ENCODE measurements at regions of chr13 and their contacts with region 1.

Region 1: GRCh38 chr13:26051657-26052311 is at the start of gene SHISA2:
- DNase-seq: peak; percentile 2 to 51 (median 31)
- ATAC-seq: peak; percentile 82
- H3K4me3 ChIP-seq: peak within 1 kb of the TSS; percentile 39
- H3K4me3 Mint-ChIP-seq: peak within 1 kb of the TSS; percentile 77 to 89 (median 83)
- H3K27ac ChIP-seq: peak within 1 kb of the TSS; percentile 13
- H3K27ac Mint-ChIP-seq: peak within 1 kb of the TSS in 4 of 9 donors; percentile 16 to 67 (median 60)
- H3K4me1 ChIP-seq: peaks cover 0 to 11% of the 10 kb centered on the region in 2 donors
- H3K4me1 Mint-ChIP-seq: peaks cover 0 to 37% (median 17%) of the 10 kb centered on the region in 7 donors
- H3K27me3 ChIP-seq: peaks cover 0 to 6% of the 10 kb centered on the region in 2 donors
- H3K27me3 Mint-ChIP-seq: peaks cover 0 to 71% (median 29%) of the 10 kb centered on the region in 5 donors
- total RNA-seq, gene SHISA2: 0.98 to 3.6 (median 1.6) TPM

Region 2: GRCh38 chr13:25847145-25847544 is 204.6 kb before region 1 on chr13:
- CTCF ChIA-PET with region 1: no interaction called
- POLR2A ChIA-PET with region 1: interaction called, 3 read pairs
- intact Hi-C with region 1: loop called in 1 of 2 experiments (anchors 5 kb)
- DNase-seq: peak in 7 of 9 donors; percentile 17 to 65 (median 47)
- ATAC-seq: peak; percentile 75
- H3K4me3 ChIP-seq: peak overlapping the region; percentile 38
- H3K4me3 Mint-ChIP-seq: peak overlapping the region; percentile 26 to 75 (median 66)
- H3K27ac ChIP-seq: peak overlapping the region; percentile 39
- H3K27ac Mint-ChIP-seq: peak overlapping the region; percentile 6 to 91 (median 72)
- H3K4me1 ChIP-seq: peaks cover 13 to 23% of the 10 kb centered on the region in 2 donors
- H3K4me1 Mint-ChIP-seq: peaks cover 21 to 48% (median 38%) of the 10 kb centered on the region in 7 donors
- H3K27me3 ChIP-seq: no peaks in the 10 kb centered on the region
- H3K27me3 Mint-ChIP-seq: peaks cover 0 to 3% (median 0%) of the 10 kb centered on the region in 5 donors

Region 3: DNA sequence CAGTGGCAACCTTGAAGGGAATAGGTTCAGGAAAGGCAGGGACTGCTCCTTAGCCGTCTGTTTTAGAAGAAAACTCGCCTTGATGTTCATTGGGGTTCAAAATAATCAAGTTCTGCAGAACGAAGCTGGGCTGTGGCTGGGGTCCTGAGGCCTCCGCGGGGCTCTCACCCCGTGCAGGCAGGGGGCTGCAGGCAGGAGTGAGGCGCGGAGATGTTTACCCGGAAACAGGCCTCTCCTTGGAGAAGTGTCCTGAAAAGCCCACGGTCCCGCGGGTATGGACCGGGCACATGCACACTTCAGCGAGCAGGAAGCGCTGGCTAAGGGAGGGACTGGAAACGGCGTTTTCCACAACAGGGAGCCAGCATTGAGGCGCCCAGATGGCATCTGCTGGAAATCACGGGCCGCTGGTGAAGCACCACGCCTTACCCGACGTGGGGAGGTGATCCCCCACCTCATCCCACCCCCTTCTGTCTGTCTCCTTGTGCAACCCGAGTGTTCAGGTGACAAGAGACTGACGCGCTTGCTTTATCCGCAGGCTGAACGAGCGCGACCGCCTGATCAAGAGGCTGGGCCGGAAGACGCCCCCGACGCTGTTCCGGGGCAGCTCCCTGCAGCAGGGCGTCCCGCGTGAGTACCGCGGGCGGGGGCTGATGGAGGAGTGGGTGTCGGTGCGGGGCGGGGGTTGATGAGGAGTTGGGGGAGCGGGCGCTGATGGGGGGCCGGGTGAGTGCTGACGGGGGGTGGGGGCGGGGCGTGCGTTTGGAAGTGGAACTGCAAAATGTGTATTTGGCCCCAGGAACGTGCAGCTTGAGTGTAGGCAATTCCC is 39.6 kb before region 1 on chr13:
- CTCF ChIA-PET with region 1: no interaction called
- POLR2A ChIA-PET with region 1: interaction called, 7 read pairs
- intact Hi-C with region 1: loop called (anchors 2 to 5 kb)
- DNase-seq: peak; percentile 51 to 88 (median 75)
- ATAC-seq: peak; percentile 95
- H3K4me3 ChIP-seq: peak overlapping the region; percentile 77
- H3K4me3 Mint-ChIP-seq: peak overlapping the region; percentile 81 to 89 (median 86)
- H3K27ac ChIP-seq: peak overlapping the region; percentile 90
- H3K27ac Mint-ChIP-seq: peak overlapping the region; percentile 67 to 95 (median 90)
- H3K4me1 ChIP-seq: peaks cover 0 to 8% of the 10 kb centered on the region in 2 donors
- H3K4me1 Mint-ChIP-seq: peaks cover 11 to 65% (median 48%) of the 10 kb centered on the region in 7 donors
- H3K27me3 ChIP-seq: no peaks in the 10 kb centered on the region
- H3K27me3 Mint-ChIP-seq: no peaks in the 10 kb centered on the region